Activated naive CD4-positive, alpha-beta T cell treated with anti-CD3 and anti-CD28 coated beads for 36 hours (primary cell): ENCODE measurements at regions of chr9 and their contacts with region 1.

Region 1: DNA sequence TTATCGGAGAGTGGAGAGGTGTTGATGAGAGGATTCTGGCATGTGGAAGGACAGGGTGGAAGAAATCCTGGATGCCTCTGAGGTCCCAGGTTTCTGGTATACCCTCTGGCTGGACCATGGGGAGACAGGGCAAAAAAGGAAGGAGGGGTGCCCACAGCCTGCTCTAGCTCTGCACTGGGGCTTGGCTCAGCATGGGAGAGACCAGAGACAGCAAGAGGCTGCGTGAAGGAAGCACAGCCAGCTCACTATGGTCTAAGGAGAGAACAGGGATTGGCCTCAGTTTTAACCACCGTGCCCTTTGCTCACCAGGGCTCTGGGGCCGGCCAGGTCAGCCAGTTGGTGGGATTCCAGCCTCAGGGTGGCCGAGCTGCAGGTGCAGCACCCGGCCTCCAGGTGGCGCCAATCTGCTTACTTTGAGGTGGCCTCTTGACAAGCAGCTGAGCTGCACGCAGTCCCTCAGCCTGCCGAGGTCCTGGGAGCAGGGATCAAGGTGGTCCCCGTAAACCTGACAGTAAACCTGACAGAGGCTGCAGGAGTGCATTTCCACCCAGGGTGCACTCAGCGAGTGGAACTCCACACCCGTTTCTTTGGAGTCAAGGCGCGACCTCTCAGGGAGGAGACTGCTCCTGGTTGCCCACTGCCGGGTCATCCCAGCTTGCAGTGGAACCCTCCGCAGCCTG is 25.0 kb upstream of the SPTLC1 start:
- DNase-seq: peak; percentile 77
- H3K4me3 Mint-ChIP-seq: no peak overlapping the region
- H3K27ac Mint-ChIP-seq: no peak overlapping the region
- H3K4me1 Mint-ChIP-seq: peaks cover 7% of the 10 kb centered on the region
- H3K27me3 Mint-ChIP-seq: peaks cover 30% of the 10 kb centered on the region

Region 2: DNA sequence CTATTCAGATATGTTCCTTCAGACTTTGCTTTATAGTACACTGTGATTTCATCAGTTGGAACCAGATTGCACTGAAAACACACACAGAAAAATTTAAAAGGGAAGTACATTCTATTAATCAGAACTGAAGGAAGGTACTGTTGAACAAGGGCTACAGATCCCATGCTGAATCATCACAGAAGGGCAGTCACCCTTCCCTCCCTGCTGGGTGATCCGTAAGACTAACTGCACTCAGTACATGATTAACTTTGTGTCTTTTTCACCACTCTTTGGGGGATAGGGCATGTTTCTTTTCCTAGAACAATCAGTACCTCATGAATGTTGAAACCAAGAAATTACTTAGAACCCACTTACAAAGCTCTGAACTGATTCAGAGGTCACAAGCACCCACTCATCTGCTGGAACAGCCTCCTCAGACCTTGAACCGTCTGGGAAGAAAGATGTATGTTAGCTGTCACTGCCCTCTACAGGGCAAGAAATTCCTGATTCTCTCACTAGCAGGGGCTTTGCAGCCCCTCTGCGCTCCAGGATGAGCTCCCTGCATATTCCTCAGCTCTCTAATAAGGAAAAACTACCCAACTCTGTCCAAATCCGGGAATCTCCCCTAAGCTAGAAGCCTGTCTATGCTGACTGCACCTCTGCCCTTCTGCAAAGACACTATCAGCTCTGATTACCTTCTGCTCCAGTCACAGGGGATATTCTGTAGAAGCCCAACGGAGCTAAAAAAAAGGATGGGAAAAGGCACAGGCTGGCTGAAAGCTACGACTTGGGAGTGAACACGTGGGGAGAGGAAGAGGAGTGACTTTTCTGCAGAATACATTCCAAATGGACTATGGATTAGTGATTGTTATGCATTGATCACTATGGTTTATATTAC is 102.3 kb after region 1 on chr9:
- CTCF ChIA-PET with region 1: interaction called, 5 read pairs
- intact Hi-C with region 1: loop called (anchors 5 kb)
- DNase-seq: no peak
- H3K4me3 Mint-ChIP-seq: no peak overlapping the region
- H3K27ac Mint-ChIP-seq: no peak overlapping the region
- H3K4me1 Mint-ChIP-seq: peaks cover 5% of the 10 kb centered on the region
- H3K27me3 Mint-ChIP-seq: no peaks in the 10 kb centered on the region

Region 3: DNA sequence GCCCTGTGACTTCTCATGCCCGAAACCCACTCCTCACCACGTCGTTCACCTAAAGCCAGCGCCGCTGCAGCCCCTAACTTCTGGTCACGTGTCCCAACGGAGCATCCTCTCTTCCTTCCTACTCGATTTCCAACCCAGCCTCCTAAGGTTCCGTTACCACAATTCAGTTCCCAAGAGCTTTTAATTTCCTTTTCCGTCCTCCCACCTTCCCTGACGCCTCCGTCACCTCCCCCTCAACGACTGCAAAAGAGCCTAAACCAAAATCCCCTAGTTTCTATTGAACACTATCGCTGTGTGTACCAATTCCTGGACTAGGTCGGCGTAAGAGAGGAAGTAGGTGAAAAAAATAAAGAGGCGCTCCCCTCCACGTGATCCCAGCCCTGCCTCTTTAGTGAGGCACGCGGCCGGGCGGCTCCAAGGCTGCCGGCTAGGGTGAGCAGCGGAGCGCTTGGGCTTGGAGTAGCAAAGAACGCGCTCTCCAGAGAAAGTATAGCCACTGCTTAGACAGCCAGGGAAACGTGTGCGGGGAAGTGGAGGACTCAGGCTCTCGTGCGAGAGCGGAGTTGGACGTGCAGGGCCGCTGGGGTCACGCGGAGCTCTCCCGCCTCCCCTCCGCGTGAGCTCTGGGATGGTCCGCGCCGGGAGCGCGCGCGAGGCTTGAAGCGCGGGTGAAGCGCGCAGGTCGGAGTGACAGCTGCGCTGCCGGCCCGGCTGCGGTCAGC is 185.2 kb after region 1 on chr9 and contains the starts of genes CENPP and NOL8:
- CTCF ChIA-PET with region 1: interaction called, 4 read pairs
- intact Hi-C with region 1: loop called (anchors 5 kb)
- DNase-seq: peak; percentile 88
- H3K4me3 Mint-ChIP-seq: peak within 1 kb of the TSS; percentile 99
- H3K27ac Mint-ChIP-seq: peak within 1 kb of the TSS; percentile 97
- H3K4me1 Mint-ChIP-seq: peaks cover 41% of the 10 kb centered on the region
- H3K27me3 Mint-ChIP-seq: no peaks in the 10 kb centered on the region
- total RNA-seq, gene CENPP: 24.9 to 26.5 TPM
- total RNA-seq, gene NOL8: 41.0 to 46.2 TPM

Region 4: GRCh38 chr9:92634712-92635605 is 494.7 kb after region 1 on chr9:
- CTCF ChIA-PET with region 1: interaction called, 23 read pairs
- intact Hi-C with region 1: loop called (anchors 1 kb)
- DNase-seq: peak; percentile 78
- H3K4me3 Mint-ChIP-seq: no peak overlapping the region
- H3K27ac Mint-ChIP-seq: no peak overlapping the region
- H3K4me1 Mint-ChIP-seq: no peaks in the 10 kb centered on the region
- H3K27me3 Mint-ChIP-seq: no peaks in the 10 kb centered on the region